PC-9 (cell line): ENCODE measurements at regions of chr2 and their contacts with region 1.

Region 1: GRCh38 chr2:170973492-170974303 is 44.6 kb downstream of the GORASP2 start:
- DNase-seq: peak; percentile 65 to 93
- H3K4me3 ChIP-seq: peak overlapping the region; percentile 70
- H3K27ac ChIP-seq: no peak overlapping the region
- H3K4me1 ChIP-seq: peaks cover 5% of the 10 kb centered on the region; the same call in 1 of the 2 replicates
- H3K27me3 ChIP-seq: no peaks in the 10 kb centered on the region
- CTCF ChIP-seq: peak; percentile 72

Region 2: GRCh38 chr2:170235860-170236679 is 737.6 kb before region 1 on chr2:
- CTCF ChIA-PET with region 1: no interaction called
- POLR2A ChIA-PET with region 1: no interaction called
- intact Hi-C with region 1: loop called (anchors 5 kb)
- DNase-seq: peak; percentile 22 to 45
- H3K4me3 ChIP-seq: no peak overlapping the region
- H3K27ac ChIP-seq: no peak overlapping the region
- H3K4me1 ChIP-seq: no peaks in the 10 kb centered on the region
- H3K27me3 ChIP-seq: no peaks in the 10 kb centered on the region
- CTCF ChIP-seq: peak; percentile 78

Region 3: GRCh38 chr2:171160119-171160955 is 186.6 kb after region 1 on chr2 and contains the start of gene TLK1:
- CTCF ChIA-PET with region 1: no interaction called
- POLR2A ChIA-PET with region 1: no interaction called
- intact Hi-C with region 1: loop called (anchors 1 kb)
- DNase-seq: peak; percentile 67 to 76
- H3K4me3 ChIP-seq: peak within 1 kb of the TSS; percentile 93
- H3K27ac ChIP-seq: peak within 1 kb of the TSS; percentile 93
- H3K4me1 ChIP-seq: peaks cover 61% of the 10 kb centered on the region
- H3K27me3 ChIP-seq: no peaks in the 10 kb centered on the region
- CTCF ChIP-seq: no peak
- total RNA-seq, gene TLK1: 74.1 and 101 TPM in 2 replicates

Region 4: GRCh38 chr2:171416009-171416926 is 442.6 kb after region 1 on chr2:
- CTCF ChIA-PET with region 1: interaction called, 5 read pairs
- POLR2A ChIA-PET with region 1: no interaction called
- intact Hi-C with region 1: loop called (anchors 1 kb)
- DNase-seq: peak; percentile 79 to 85
- H3K4me3 ChIP-seq: no peak overlapping the region
- H3K27ac ChIP-seq: no peak overlapping the region
- H3K4me1 ChIP-seq: peaks cover 10% of the 10 kb centered on the region; the same call in 1 of the 2 replicates
- H3K27me3 ChIP-seq: no peaks in the 10 kb centered on the region
- CTCF ChIP-seq: peak; percentile 90

Region 5: GRCh38 chr2:171447675-171448074 is 474.0 kb after region 1 on chr2:
- CTCF ChIA-PET with region 1: no interaction called
- POLR2A ChIA-PET with region 1: no interaction called
- intact Hi-C with region 1: loop called (anchors 1 kb)
- DNase-seq: no peak
- H3K4me3 ChIP-seq: no peak overlapping the region
- H3K27ac ChIP-seq: no peak overlapping the region
- H3K4me1 ChIP-seq: no peaks in the 10 kb centered on the region
- H3K27me3 ChIP-seq: no peaks in the 10 kb centered on the region
- CTCF ChIP-seq: peak; percentile 51

Region 6: DNA sequence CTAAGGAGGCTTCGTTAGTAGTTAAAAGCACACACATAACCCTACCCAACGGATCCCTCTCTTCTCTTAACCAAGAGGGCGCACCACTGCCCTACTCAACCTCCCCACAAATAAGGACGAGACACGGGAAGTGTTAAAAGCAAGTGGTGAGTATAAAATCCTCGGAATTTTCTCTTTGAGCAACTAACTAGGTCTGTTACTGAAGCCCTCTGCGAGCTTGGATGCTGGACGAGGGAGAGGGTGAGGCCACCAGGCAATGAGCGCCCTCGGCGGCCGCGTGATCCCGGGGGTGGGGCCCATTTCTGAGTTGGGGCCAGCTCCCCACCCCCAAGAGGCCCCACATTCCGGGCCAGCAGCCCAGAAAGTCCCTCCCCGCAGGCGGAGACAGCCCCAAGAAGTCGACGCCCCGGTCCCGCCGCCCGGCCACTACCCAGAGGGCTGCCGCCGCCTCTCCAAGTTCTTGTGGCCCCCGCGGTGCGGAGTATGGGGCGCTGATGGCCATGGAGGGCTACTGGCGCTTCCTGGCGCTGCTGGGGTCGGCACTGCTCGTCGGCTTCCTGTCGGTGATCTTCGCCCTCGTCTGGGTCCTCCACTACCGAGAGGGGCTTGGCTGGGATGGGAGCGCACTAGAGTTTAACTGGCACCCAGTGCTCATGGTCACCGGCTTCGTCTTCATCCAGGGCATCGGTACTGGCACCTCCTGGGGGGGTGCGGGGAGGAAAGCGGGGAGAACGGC is 548.5 kb after region 1 on chr2 and contains the start of gene CYBRD1:
- CTCF ChIA-PET with region 1: no interaction called
- POLR2A ChIA-PET with region 1: no interaction called
- intact Hi-C with region 1: loop called (anchors 2 kb)
- DNase-seq: peak; percentile 66 to 92
- H3K4me3 ChIP-seq: peak within 1 kb of the TSS; percentile 83
- H3K27ac ChIP-seq: peak within 1 kb of the TSS; percentile 81
- H3K4me1 ChIP-seq: peaks cover 21% of the 10 kb centered on the region
- H3K27me3 ChIP-seq: no peaks in the 10 kb centered on the region
- CTCF ChIP-seq: no peak
- total RNA-seq, gene CYBRD1: 125 and 132 TPM in 2 replicates

Region 7: GRCh38 chr2:172013396-172013795 is 1039.7 kb after region 1 on chr2:
- CTCF ChIA-PET with region 1: no interaction called
- POLR2A ChIA-PET with region 1: no interaction called
- intact Hi-C with region 1: no loop called
- DNase-seq: no peak
- H3K4me3 ChIP-seq: no peak overlapping the region
- H3K27ac ChIP-seq: no peak overlapping the region
- H3K4me1 ChIP-seq: peaks cover 7% of the 10 kb centered on the region
- H3K27me3 ChIP-seq: no peaks in the 10 kb centered on the region
- CTCF ChIP-seq: no peak